Right cardiac atrium (tissue), 5 donors: ENCODE measurements at regions of chr11 and their contacts with region 1.

Region 1: DNA sequence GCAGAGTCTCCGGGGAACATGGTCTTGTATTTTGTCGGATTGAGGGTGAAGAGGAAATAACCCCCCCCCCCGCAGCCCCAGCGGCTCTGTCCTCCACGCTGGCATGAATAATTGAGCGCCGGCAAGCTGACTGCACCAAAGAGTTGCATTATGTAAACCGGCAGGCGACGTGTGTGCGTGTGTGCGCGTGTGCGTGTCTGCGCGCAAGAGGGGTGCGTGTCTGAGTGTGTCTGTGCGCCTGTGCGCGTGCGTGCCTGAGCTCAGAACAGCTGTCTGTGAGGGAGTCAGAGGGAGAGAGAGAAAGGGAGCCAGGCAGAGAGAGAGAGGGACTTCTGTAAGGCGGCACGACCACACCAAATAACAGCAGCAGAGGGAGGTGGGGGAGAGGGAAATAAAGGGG is 94.4 kb downstream of the SCN3B start:
- DNase-seq: peak; percentile 76 to 89 (median 89)
- ATAC-seq: peak; percentile 90
- H3K4me3 ChIP-seq: peak overlapping the region; percentile 27
- H3K27ac ChIP-seq: no peak overlapping the region
- H3K4me1 ChIP-seq: no peaks in the 10 kb centered on the region
- H3K27me3 ChIP-seq: no peaks in the 10 kb centered on the region

Region 2: DNA sequence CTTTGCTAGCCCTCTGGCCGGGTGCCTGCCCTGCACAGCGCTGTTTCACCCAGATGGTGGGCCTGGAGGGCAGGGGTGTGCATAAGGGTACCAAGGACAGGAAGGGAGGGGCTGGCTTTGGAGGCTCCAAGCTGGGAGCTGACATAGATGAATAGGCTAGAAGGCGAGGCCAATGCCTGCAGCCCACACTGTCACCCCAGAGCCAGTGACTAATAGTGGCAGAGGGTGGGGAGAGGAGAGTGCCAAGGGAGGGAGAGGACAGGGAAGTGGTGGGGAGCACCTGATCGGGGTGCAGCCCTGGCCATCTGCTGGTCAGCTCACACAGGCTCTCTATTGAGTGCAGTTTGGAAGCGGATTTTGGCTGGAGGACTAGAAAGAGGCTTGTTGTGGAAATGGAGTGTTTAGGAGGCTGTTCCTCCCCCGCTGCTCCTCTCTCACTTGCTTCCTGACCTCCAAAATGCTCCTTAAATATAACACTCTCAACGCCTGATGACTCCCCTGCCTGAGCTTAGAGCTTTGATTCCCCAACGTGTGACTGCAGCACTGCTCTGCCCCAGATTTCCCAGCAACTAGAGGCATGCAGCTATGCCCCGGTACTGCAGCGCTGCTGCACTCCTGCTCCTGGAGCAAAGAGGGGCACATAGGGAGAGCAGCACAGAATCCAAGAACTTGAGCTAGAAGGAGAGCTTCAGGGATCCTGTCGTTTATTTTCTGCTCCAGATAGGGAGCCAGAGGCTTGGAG is 40.8 kb before region 1 on chr11:
- intact Hi-C with region 1: loop called in 3 of 4 experiments (anchors 5 kb)
- DNase-seq: no peak
- ATAC-seq: peak; percentile 53 to 84
- H3K4me3 ChIP-seq: no peak overlapping the region
- H3K27ac ChIP-seq: no peak overlapping the region
- H3K4me1 ChIP-seq: peaks cover 13% of the 10 kb centered on the region
- H3K27me3 ChIP-seq: no peaks in the 10 kb centered on the region